ENCODE measurements at regions of chr1 and their contacts with region 1.

Region 1: GRCh38 chr1:151594143-151594625 is 17.7 kb upstream of the SNX27 start:
- DNase-seq: peak; percentile 77
- ATAC-seq: peak; percentile 97
- H3K4me3 ChIP-seq: no peak overlapping the region
- H3K27ac ChIP-seq: no peak overlapping the region
- H3K4me1 ChIP-seq: peaks cover 3 to 13% of the 10 kb centered on the region in 2 experiments; a peak in 3 of 4 replicates
- H3K27me3 ChIP-seq: no peaks in the 10 kb centered on the region
- CTCF ChIP-seq: peak; percentile 90 to 97 (median 91)
- POLR2A ChIP-seq: no peak
- RAD21 ChIP-seq: peak; percentile 92

Region 2: DNA sequence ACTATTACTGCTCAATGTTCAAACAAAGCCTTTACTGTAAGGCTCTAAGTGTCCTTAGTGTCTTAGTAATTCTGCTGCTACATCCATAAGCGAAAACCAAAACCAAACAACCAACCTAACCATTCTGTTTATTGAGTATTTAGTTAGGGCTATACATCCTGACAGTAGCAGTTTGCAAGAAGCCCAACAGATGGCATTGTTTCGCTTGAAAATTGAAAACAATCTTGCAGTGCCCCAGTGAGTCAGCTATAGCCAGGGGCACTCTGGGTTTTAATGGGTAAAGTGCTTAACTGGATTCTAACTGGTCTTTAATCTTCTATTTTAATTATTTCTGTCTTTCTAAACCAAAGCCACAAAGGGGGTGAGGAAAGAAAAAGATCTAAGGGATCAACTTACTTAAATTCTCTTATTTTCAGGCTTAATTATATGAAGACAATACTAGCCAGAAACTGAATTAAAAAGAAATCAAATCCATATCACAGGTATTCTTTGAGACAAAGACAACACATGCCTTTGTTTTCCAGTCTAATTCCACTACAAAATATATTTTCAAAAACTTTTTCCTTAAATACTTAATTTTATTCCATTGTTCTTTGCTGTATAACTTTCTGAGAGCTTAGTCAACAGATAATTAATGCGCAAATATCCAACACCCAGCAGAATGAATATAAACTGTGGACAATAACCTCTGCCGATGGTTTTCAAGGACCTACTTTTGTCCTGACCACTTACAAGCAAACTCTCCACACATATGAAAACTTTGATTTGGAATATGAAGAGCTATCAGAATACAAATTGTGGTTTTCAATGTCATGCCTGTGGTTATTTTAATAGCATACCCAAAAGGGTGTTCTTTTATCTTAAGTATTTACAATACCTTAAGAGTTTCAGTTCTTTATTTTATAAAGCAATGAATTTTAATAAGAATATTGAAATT is 150.1 kb before region 1 on chr1:
- CTCF ChIA-PET with region 1: interaction called, 3 read pairs
- POLR2A ChIA-PET with region 1: no interaction called
- RAD21 ChIA-PET with region 1: no interaction called
- intact Hi-C with region 1: loop called (anchors 5 kb)
- DNase-seq: peak; percentile 76
- ATAC-seq: peak; percentile 99
- H3K4me3 ChIP-seq: no peak overlapping the region
- H3K27ac ChIP-seq: peak overlapping the region; percentile 16; the same call in 1 of the 2 replicates
- H3K4me1 ChIP-seq: peaks cover 11 to 13% of the 10 kb centered on the region in 2 experiments
- H3K27me3 ChIP-seq: no peaks in the 10 kb centered on the region
- CTCF ChIP-seq: peak; percentile 79 to 84 (median 83); a peak in 5 of 6 replicates
- POLR2A ChIP-seq: no peak
- RAD21 ChIP-seq: peak; percentile 89

Region 3: GRCh38 chr1:151459331-151460046 is 134.7 kb before region 1 on chr1 and contains the start of gene POGZ:
- CTCF ChIA-PET with region 1: no interaction called
- POLR2A ChIA-PET with region 1: no interaction called
- RAD21 ChIA-PET with region 1: no interaction called
- intact Hi-C with region 1: loop called (anchors 5 kb)
- DNase-seq: peak; percentile 94
- ATAC-seq: peak; percentile 88
- H3K4me3 ChIP-seq: peak within 1 kb of the TSS; percentile 62 to 89
- H3K27ac ChIP-seq: peak within 1 kb of the TSS; percentile 73
- H3K4me1 ChIP-seq: peaks cover 10 to 19% of the 10 kb centered on the region in 2 experiments; a peak in 3 of 4 replicates
- H3K27me3 ChIP-seq: no peaks in the 10 kb centered on the region
- CTCF ChIP-seq: no peak
- POLR2A ChIP-seq: peak; percentile 12
- RAD21 ChIP-seq: no peak
- total RNA-seq, gene POGZ: 80.6 TPM

Region 4: GRCh38 chr1:151606395-151606794 is 12.2 kb after region 1 on chr1:
- CTCF ChIA-PET with region 1: interaction called, 13 read pairs
- POLR2A ChIA-PET with region 1: interaction called, 5 read pairs
- RAD21 ChIA-PET with region 1: no interaction called
- intact Hi-C with region 1: no loop called
- DNase-seq: peak; percentile 29
- ATAC-seq: peak; percentile 33
- H3K4me3 ChIP-seq: no peak overlapping the region
- H3K27ac ChIP-seq: no peak overlapping the region
- H3K4me1 ChIP-seq: peaks cover 5 to 37% of the 10 kb centered on the region in 2 experiments
- H3K27me3 ChIP-seq: no peaks in the 10 kb centered on the region
- CTCF ChIP-seq: no peak
- POLR2A ChIP-seq: no peak
- RAD21 ChIP-seq: no peak

Region 5: DNA sequence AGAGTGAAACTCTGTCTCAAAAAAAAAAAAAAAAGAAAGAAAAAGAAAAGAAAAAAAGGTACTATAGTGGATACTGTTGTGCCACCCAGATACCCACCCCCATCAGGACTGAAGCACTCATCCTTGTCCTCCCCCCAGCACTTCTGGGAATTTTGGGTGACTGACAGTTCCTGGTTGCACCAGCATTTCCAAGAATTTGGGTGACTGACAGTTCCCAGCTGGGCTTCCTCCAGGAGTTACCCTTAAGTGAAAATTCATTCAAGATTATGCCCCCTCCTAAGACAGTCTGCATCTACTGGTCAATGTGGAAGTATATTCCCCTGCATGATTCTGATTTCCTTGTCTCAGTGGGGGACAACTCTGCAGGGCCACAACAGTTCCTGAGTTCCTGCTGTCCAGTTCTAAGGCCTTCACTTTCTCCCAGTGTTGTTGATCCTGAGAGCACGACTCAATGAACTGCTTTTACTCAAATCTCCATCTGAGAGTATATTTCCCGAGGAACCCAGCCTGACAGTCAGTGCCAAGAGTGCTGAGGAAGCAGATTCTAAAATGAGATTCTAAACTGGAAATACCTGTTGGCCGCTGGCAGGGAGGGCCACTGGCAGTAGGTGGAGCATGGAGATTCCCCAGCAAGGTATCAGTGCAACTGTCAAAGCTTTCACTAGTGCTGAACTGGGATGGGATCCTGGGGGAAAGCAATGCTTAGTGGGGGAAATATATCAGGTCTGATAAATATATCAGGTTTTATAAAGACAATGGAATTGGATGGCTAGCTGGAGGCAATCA is 145.6 kb after region 1 on chr1:
- CTCF ChIA-PET with region 1: interaction called, 9 read pairs
- POLR2A ChIA-PET with region 1: no interaction called
- RAD21 ChIA-PET with region 1: no interaction called
- intact Hi-C with region 1: loop called (anchors 2 kb)
- DNase-seq: no peak
- ATAC-seq: no peak; the same call in 1 of the 2 replicates
- H3K4me3 ChIP-seq: no peak overlapping the region
- H3K27ac ChIP-seq: no peak overlapping the region
- H3K4me1 ChIP-seq: peaks cover 6 to 10% of the 10 kb centered on the region in 2 experiments; a peak in 2 of 4 replicates
- H3K27me3 ChIP-seq: no peaks in the 10 kb centered on the region
- CTCF ChIP-seq: no peak
- POLR2A ChIP-seq: no peak
- RAD21 ChIP-seq: peak; percentile 23; the same call in 1 of the 2 replicates